ENCODE measurements at regions of chr7 and their contacts with region 1.

Region 1: GRCh38 chr7:111098011-111098925 is 7.3 kb downstream of the LRRN3 start:
- DNase-seq: peak; percentile 83
- H3K4me3 Mint-ChIP-seq: peak overlapping the region; percentile 70
- H3K27ac Mint-ChIP-seq: peak overlapping the region; percentile 85
- H3K4me1 Mint-ChIP-seq: peaks cover 68% of the 10 kb centered on the region
- H3K27me3 Mint-ChIP-seq: no peaks in the 10 kb centered on the region

Region 2: GRCh38 chr7:109844362-109844761 is 1253.9 kb before region 1 on chr7:
- CTCF ChIA-PET with region 1: no interaction called
- intact Hi-C with region 1: loop called (anchors 1 kb)
- DNase-seq: peak; percentile 18
- H3K4me3 Mint-ChIP-seq: no peak overlapping the region
- H3K27ac Mint-ChIP-seq: no peak overlapping the region
- H3K4me1 Mint-ChIP-seq: no peaks in the 10 kb centered on the region
- H3K27me3 Mint-ChIP-seq: peaks cover 10% of the 10 kb centered on the region

Region 3: DNA sequence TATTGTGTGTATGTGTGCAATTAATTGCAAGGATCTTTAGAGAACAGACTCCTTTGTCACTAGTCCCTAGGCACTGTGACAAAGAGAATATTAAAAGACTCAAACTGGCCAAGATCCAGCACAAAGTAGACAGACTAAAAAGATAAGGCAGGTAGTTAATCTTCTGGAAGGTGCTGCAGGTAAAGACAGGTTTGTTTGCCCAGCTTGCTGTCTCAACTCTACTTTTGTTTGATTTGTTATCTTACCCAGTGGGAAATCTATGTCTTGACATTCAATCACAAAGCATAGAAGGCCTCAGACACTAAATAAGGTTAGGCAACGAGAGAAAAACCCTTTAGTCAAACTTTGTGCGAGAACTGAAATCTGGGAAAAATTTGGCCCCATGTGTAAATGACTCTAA is 815.2 kb before region 1 on chr7:
- CTCF ChIA-PET with region 1: no interaction called
- intact Hi-C with region 1: loop called (anchors 10 kb)
- DNase-seq: no peak
- H3K4me3 Mint-ChIP-seq: no peak overlapping the region
- H3K27ac Mint-ChIP-seq: no peak overlapping the region
- H3K4me1 Mint-ChIP-seq: no peaks in the 10 kb centered on the region
- H3K27me3 Mint-ChIP-seq: no peaks in the 10 kb centered on the region

Region 4: DNA sequence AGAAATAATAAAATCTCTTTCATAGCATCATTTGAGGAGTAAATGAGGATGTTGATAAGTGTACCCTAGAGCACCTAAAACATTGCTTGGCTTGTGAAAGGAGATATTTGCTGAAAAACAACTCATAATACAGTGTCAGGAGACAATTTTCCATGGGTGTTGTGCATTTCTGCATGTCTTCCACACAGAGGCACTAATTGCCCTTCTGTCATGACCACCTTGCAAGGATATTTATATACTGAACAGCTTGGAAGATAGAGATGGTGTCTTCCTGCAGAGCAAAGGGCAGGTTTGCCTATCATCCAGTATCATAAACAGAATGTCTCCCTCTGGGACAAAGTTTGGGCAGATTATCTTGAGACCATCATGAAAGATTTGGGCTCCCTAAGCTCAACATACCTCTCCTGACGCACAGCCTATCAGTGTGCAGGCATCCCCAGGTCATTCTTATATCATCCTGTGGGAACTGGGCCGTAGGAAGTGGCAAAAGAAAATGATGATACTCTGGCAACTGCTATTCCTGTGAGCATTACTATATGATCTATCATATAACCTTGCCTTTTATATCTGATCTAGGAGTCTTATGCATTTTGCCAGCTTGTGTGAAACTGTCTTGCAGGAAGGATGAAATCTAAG is 502.5 kb before region 1 on chr7:
- CTCF ChIA-PET with region 1: interaction called, 6 read pairs
- intact Hi-C with region 1: loop called (anchors 1 kb)
- DNase-seq: no peak
- H3K4me3 Mint-ChIP-seq: no peak overlapping the region
- H3K27ac Mint-ChIP-seq: no peak overlapping the region
- H3K4me1 Mint-ChIP-seq: no peaks in the 10 kb centered on the region
- H3K27me3 Mint-ChIP-seq: no peaks in the 10 kb centered on the region

Region 5: DNA sequence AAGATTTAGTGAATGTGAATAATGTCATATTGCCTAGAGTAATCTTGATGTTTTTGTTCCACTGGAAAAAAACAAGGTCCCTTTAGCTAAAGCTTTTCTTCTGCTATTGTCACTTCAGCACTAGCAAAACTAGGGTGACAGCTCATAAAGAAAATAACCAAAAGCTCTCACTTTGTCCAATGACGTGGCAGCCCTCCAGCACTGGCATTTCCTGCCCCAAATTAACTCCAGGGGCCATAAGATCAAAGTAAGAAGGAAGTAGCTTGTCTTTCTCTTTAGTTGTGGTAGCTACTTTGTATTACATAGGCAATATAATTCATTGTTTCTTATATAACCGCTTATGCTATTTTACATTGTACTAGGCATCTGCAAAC is 39.9 kb after region 1 on chr7:
- CTCF ChIA-PET with region 1: interaction called, 10 read pairs
- intact Hi-C with region 1: no loop called
- DNase-seq: peak; percentile 86
- H3K4me3 Mint-ChIP-seq: peak overlapping the region; percentile 62
- H3K27ac Mint-ChIP-seq: peak overlapping the region; percentile 92
- H3K4me1 Mint-ChIP-seq: peaks cover 32% of the 10 kb centered on the region
- H3K27me3 Mint-ChIP-seq: no peaks in the 10 kb centered on the region

Region 6: DNA sequence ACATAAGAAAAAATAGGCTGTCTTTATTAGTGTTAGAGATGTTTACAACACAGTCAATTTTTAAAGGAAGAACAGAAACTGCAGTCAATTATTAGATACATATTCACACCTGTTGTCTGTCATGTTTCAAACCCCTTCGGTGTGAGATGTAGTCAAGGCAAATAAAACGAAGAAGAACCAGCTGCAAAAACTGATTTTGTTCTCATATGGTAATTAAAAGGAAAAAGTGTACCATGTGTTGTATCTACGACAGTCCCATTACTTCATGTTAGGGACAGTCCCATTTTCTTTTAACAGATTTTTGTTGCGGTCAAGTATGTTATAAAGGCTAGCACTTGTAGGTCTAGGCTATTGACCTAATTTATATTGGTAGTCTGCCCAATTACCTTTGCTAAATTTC is 142.1 kb after region 1 on chr7:
- CTCF ChIA-PET with region 1: no interaction called
- intact Hi-C with region 1: no loop called
- DNase-seq: no peak
- H3K4me3 Mint-ChIP-seq: no peak overlapping the region
- H3K27ac Mint-ChIP-seq: no peak overlapping the region
- H3K4me1 Mint-ChIP-seq: peaks cover 15% of the 10 kb centered on the region
- H3K27me3 Mint-ChIP-seq: no peaks in the 10 kb centered on the region

Region 7: GRCh38 chr7:111561885-111562732 is 463.8 kb after region 1 on chr7 and contains the start of gene IMMP2L:
- CTCF ChIA-PET with region 1: interaction called, 3 read pairs
- intact Hi-C with region 1: loop called (anchors 2 kb)
- DNase-seq: peak; percentile 89
- H3K4me3 Mint-ChIP-seq: peak within 1 kb of the TSS; percentile 89
- H3K27ac Mint-ChIP-seq: peak within 1 kb of the TSS; percentile 85
- H3K4me1 Mint-ChIP-seq: peaks cover 32% of the 10 kb centered on the region
- H3K27me3 Mint-ChIP-seq: no peaks in the 10 kb centered on the region
- total RNA-seq, gene IMMP2L: 24.4 to 26.6 TPM